ENCODE measurements at regions of chr7 and their contacts with region 1.

Region 1: DNA sequence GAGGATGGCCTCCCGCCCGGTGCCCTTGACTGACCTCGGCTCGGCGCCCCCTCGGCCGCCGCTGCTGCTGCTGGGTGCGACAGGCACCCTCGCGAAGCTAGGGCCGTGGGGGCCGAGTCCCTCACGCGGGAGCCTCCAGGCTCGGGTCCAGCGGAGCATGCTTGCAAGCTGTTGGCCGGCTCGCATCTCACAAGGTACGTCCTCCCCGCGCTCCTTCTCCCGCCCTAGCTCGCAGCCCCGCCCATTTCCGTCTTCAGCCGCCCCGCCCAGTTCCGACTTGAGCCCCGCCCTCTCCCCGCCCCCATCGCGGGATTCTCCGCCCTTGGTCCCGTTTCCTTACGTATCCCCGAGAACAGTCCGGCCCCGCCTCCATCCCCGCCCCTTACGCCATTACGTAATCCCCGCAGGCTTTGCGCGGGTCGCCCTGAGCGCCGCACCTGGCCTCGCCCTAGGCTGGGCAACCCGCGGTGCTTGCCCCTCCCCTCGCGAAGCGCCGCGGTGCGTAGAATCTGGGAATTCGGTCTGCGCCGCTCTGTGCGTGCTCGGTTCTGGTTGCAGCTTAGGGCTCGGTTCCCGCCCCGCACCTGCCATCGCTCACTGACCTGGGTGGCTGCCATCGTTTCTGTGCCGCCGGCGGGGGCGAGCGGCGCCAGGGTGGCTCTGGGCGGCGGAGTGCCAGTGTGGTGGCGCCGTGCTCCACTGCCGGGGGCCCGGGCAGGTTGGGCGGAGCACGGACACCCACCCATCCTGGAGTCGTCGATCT is at the start of gene ABHD11:
- DNase-seq: peak; percentile 98
- ATAC-seq: peak; percentile 61
- H3K4me3 Mint-ChIP-seq: peak within 1 kb of the TSS; percentile 93
- H3K27ac Mint-ChIP-seq: peak within 1 kb of the TSS; percentile 98
- H3K4me1 Mint-ChIP-seq: peaks cover 37% of the 10 kb centered on the region
- H3K27me3 Mint-ChIP-seq: peaks cover 27% of the 10 kb centered on the region
- CTCF ChIP-seq: no peak
- total RNA-seq, gene ABHD11: 23.8 to 27.6 TPM (median 26.5 TPM) in 3 replicates

Region 2: DNA sequence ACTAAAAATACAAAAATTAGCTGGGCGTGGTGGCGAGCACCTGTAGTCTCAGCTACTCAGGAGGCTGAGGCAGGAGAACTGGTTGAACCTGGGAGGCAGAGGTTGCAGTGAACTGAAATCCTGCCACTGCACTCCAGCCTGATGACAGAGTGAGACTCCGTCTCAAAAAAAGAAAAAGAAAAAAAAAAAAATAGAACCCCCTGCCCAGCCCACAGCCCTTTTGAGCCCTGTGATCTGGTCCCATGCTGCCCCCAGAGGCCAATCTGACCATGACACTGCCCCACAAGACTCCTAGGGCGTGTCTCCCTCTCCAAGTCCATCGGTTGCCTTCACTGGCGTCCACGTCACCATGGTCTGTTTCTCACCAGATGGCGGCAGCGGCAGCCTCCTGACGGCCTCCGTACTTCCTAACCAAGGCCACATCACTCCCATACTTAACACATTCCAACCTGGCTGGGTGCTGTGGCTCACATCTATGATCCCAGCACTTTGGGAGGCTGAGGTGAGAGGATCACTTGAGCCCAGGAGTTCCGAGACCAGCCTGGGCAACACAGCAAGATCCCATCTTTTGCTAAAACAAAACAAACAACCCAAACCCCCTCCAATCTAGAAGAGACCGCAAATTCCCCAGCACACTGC is 37.3 kb before region 1 on chr7:
- CTCF ChIA-PET with region 1: interaction called, 16 read pairs
- POLR2A ChIA-PET with region 1: interaction called, 6 read pairs
- DNase-seq: peak; percentile 87
- ATAC-seq: peak; percentile 75
- H3K4me3 Mint-ChIP-seq: peak overlapping the region; percentile 24; the same call in 1 of the 2 replicates
- H3K27ac Mint-ChIP-seq: peak overlapping the region; percentile 63; the same call in 1 of the 2 replicates
- H3K4me1 Mint-ChIP-seq: peaks cover 15% of the 10 kb centered on the region
- H3K27me3 Mint-ChIP-seq: no peaks in the 10 kb centered on the region
- CTCF ChIP-seq: peak; percentile 62

Region 3: GRCh38 chr7:73769992-73770859 is 31.4 kb after region 1 on chr7 and contains the start of gene CLDN3:
- CTCF ChIA-PET with region 1: interaction called, 22 read pairs
- POLR2A ChIA-PET with region 1: interaction called, 25 read pairs
- DNase-seq: peak; percentile 93
- ATAC-seq: peak; percentile 89
- H3K4me3 Mint-ChIP-seq: peak within 1 kb of the TSS; percentile 79
- H3K27ac Mint-ChIP-seq: peak within 1 kb of the TSS; percentile 91
- H3K4me1 Mint-ChIP-seq: peaks cover 10% of the 10 kb centered on the region
- H3K27me3 Mint-ChIP-seq: peaks cover 15% of the 10 kb centered on the region
- CTCF ChIP-seq: no peak
- total RNA-seq, gene CLDN3: 20.7 to 35.1 TPM (median 34.8 TPM) in 3 replicates

Region 4: GRCh38 chr7:73828107-73828803 is 89.5 kb after region 1 on chr7:
- CTCF ChIA-PET with region 1: interaction called, 9 read pairs
- POLR2A ChIA-PET with region 1: interaction called, 91 read pairs
- DNase-seq: no peak
- ATAC-seq: no peak
- H3K4me3 Mint-ChIP-seq: peak overlapping the region; percentile 4
- H3K27ac Mint-ChIP-seq: peak overlapping the region; percentile 87
- H3K4me1 Mint-ChIP-seq: peaks cover 69% of the 10 kb centered on the region
- H3K27me3 Mint-ChIP-seq: peaks cover 7% of the 10 kb centered on the region
- CTCF ChIP-seq: no peak

Region 5: GRCh38 chr7:73856941-73857340 is 118.1 kb after region 1 on chr7:
- CTCF ChIA-PET with region 1: interaction called, 16 read pairs
- POLR2A ChIA-PET with region 1: interaction called, 7 read pairs
- DNase-seq: no peak
- ATAC-seq: no peak
- H3K4me3 Mint-ChIP-seq: no peak overlapping the region
- H3K27ac Mint-ChIP-seq: no peak overlapping the region; the same call in 1 of the 2 replicates
- H3K4me1 Mint-ChIP-seq: peaks cover 6% of the 10 kb centered on the region
- H3K27me3 Mint-ChIP-seq: peaks cover 24% of the 10 kb centered on the region
- CTCF ChIP-seq: no peak

Region 6: GRCh38 chr7:74002474-74003017 is 263.8 kb after region 1 on chr7:
- CTCF ChIA-PET with region 1: no interaction called
- POLR2A ChIA-PET with region 1: no interaction called
- DNase-seq: no peak
- ATAC-seq: no peak
- H3K4me3 Mint-ChIP-seq: no peak overlapping the region
- H3K27ac Mint-ChIP-seq: 0 out of 2 replicates have a peak overlapping the region, but pooled peaks have one; percentile 5
- H3K4me1 Mint-ChIP-seq: peaks cover 2% of the 10 kb centered on the region; the same call in 1 of the 2 replicates
- H3K27me3 Mint-ChIP-seq: no peaks in the 10 kb centered on the region
- CTCF ChIP-seq: no peak

Measured in WTC11 (cell line).